ENCODE measurements at regions of chr6 and their contacts with region 1.

Region 1: DNA sequence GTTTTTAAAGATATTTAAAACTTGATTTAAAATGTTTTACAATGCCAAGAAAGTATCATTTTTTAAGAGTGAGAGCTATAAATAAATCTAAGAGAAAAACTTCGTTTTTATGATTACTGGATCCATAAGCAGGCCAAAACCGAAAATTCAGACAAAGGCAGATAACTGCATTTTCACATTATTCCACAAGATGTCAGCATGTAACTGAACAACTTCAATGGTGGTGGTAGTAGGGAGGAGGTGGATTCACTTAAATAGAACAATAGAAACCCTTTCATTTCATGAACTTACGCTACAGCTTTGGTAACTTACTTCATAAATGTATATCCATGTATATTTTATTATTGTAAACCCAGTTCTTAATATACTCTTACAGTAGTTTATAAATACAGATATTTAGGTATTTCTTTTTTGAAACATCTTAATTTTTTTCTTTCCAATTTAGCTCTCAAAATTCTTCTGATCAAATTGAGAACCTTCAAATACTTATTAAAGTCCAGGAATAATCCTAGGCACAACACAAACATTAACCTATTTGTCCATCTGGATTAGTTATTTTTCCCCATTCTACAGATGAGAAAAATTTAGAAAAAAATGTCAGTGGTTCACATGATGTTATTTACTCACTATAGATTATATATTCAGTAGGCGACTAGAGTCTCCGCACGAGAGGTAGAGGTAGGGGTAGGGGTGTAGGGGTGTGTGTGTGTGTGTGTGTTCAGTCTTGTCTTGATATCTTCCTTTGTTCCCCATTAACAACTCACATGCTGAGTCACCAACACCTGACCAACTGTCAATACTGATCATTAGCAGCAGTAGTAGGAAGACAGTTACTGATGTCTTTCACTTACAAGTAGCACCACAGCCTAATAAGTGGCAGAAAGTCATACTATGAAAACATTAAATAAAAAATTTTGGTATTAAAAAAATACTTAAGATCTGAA is 111.5 kb downstream of the ARHGAP18 start:
- DNase-seq: no peak
- ATAC-seq: peak in 3 of 4 donors; percentile 67 to 71 (median 71)
- H3K4me3 ChIP-seq: no peak overlapping the region
- H3K27ac ChIP-seq: no peak overlapping the region
- H3K4me1 ChIP-seq: peaks cover 0 to 8% (median 0%) of the 10 kb centered on the region in 12 donors
- H3K27me3 ChIP-seq: no peaks in the 10 kb centered on the region
- CTCF ChIP-seq: peak; percentile 70 to 92 (median 88)
- POLR2A ChIP-seq: no peak

Region 2: DNA sequence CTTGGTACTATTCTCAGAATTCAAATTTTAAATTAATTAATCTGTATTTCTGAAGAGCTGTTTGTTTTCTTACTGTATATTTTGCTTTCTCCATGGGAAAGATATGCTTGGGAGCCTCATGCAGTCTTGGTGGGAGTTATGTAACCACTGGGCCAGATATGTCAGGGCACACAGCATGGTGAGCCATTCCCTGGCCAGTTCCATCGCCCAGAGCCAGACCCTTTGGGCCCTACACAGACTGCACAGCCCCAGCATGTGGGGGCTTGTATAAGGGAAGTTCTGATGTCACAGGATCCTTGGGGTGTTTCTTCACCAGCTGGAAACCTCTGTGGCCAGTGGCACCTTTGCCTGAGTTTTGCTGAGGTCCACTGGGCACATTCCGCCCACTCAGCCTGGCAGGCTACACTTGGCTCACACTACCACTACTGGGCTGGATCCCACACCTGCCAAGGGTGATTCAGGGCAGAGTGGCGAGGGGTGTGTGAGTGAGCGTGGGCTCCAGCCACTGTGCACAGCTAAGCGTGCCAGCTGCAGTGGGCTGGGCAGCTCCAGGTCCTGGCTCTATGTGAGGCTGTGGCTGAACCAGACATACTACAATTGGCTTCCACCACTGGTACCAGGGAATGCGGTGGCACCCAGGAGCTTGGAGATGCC is 182.1 kb before region 1 on chr6:
- intact Hi-C with region 1: no loop called
- DNase-seq: peak in 2 of 5 donors; percentile 37 to 61
- ATAC-seq: peak; percentile 67 to 95 (median 84)
- H3K4me3 ChIP-seq: no peak overlapping the region
- H3K27ac ChIP-seq: peak overlapping the region in 3 of 12 donors; percentile 3 to 45 (median 28)
- H3K4me1 ChIP-seq: peaks cover 0 to 9% (median 0%) of the 10 kb centered on the region in 12 donors
- H3K27me3 ChIP-seq: no peaks in the 10 kb centered on the region
- CTCF ChIP-seq: no peak
- POLR2A ChIP-seq: no peak

Region 3: DNA sequence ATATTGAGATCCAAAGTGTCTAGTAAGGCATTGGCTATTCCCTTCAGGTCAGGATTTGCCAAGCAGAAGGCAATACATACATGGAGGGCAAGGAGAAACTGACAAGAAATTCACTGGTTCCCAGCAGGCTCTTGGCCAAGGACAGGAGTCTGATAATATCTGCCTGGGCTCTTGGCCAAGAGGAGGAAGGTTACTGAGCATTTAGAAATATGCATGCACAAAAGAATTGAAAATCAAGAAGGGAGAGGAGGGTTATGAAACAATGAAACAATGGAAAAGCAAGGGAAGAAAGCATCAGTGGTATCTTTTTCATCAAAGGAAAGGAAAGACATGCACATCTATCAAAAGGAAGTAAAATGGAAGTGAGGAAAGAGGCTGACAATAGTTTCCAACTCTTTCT is 69.1 kb after region 1 on chr6:
- intact Hi-C with region 1: loop called in 1 of 10 experiments (anchors 5 kb)
- DNase-seq: peak in 1 of 5 donors; percentile 33
- ATAC-seq: no peak
- H3K4me3 ChIP-seq: no peak overlapping the region
- H3K27ac ChIP-seq: no peak overlapping the region
- H3K4me1 ChIP-seq: peaks cover 0 to 43% (median 23%) of the 10 kb centered on the region in 12 donors
- H3K27me3 ChIP-seq: no peaks in the 10 kb centered on the region
- CTCF ChIP-seq: no peak
- POLR2A ChIP-seq: no peak

Region 4: DNA sequence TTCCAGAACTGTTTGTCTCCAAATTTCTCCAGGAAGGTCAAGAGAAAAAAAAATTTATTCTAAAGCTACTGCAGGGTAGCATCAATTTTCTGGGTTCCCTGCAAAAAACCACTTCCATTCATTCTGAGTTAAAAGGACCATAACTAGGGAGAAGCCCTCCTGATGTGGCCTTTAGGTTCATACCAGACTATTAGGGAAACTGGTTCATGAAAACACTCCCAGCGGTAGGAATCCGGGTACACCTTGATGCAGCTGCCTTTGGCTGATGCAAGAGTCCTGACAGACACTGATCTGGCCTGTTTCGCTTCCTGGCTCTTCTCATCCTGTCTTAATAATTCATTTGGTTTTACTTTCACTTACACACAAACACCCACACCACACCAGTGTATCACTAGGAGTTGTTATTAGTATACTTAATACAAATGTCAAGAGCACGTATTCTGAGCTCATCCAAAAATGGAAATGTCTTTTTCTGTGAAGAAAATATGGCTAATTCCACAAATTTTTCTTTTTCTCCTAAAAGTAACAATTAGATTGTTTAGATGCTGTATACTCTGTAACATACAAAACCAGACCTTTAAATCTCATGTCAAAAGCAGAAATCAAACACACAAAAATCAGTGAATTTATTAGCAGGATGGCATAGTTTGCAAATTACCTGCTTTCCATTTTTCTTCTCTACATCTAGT is 149.8 kb after region 1 on chr6:
- intact Hi-C with region 1: loop called in 3 of 10 experiments (anchors 1 to 2 kb)
- DNase-seq: peak in 3 of 5 donors; percentile 19 to 31 (median 27)
- ATAC-seq: peak; percentile 28 to 78 (median 56)
- H3K4me3 ChIP-seq: peak overlapping the region in 3 of 12 donors; percentile 2 to 5 (median 3)
- H3K27ac ChIP-seq: peak overlapping the region in 11 of 12 donors; percentile 2 to 87 (median 40)
- H3K4me1 ChIP-seq: peaks cover 0 to 57% (median 23%) of the 10 kb centered on the region in 12 donors
- H3K27me3 ChIP-seq: no peaks in the 10 kb centered on the region
- CTCF ChIP-seq: no peak
- POLR2A ChIP-seq: no peak

Region 5: GRCh38 chr6:129946439-129947145 is 348.1 kb after region 1 on chr6:
- intact Hi-C with region 1: loop called in 1 of 10 experiments (anchors 10 kb)
- DNase-seq: no peak
- ATAC-seq: no peak
- H3K4me3 ChIP-seq: no peak overlapping the region
- H3K27ac ChIP-seq: no peak overlapping the region
- H3K4me1 ChIP-seq: no peaks in the 10 kb centered on the region
- H3K27me3 ChIP-seq: peaks cover 0 to 9% (median 0%) of the 10 kb centered on the region in 9 donors
- CTCF ChIP-seq: no peak
- POLR2A ChIP-seq: no peak

Region 6: GRCh38 chr6:130872250-130873095 is 1274.0 kb after region 1 on chr6:
- intact Hi-C with region 1: loop called in 2 of 10 experiments (anchors 10 kb)
- DNase-seq: peak; percentile 44 to 75 (median 60)
- ATAC-seq: peak in 1 of 4 donors; percentile 54
- H3K4me3 ChIP-seq: no peak overlapping the region
- H3K27ac ChIP-seq: no peak overlapping the region
- H3K4me1 ChIP-seq: peaks cover 0 to 9% (median 0%) of the 10 kb centered on the region in 12 donors
- H3K27me3 ChIP-seq: no peaks in the 10 kb centered on the region
- CTCF ChIP-seq: peak; percentile 73 to 96 (median 84)
- POLR2A ChIP-seq: no peak

Measured in heart left ventricle (tissue), 16 donors.